Breast epithelium (tissue), 4 donors: ENCODE measurements at regions of chr3 and their contacts with region 1.

Region 1: DNA sequence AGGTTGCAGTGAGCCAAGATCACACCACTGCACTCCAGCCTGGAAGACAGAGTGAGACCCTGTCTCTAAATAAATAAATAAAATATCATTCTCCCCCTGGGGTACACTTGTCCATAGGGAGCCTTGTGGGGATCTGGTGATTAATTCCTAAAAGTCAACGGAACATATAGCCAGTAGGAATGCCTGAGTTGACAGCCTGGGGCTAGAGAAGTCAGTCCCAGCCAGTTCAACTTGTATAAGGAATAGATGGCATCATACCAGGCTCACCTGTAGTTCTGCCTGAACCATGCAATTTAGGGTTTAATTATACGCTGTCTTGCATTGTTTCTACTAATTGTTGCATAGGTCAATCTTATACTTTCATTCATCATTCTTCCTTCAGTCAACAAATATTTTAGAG is 5.9 kb upstream of the BOC start:
- DNase-seq: no peak
- H3K4me3 ChIP-seq: no peak overlapping the region
- H3K27ac ChIP-seq: no peak overlapping the region
- H3K4me1 ChIP-seq: peaks cover 0 to 3% of the 10 kb centered on the region in 2 donors
- H3K27me3 ChIP-seq: no peaks in the 10 kb centered on the region
- CTCF ChIP-seq: no peak
- POLR2A ChIP-seq: no peak

Region 2: DNA sequence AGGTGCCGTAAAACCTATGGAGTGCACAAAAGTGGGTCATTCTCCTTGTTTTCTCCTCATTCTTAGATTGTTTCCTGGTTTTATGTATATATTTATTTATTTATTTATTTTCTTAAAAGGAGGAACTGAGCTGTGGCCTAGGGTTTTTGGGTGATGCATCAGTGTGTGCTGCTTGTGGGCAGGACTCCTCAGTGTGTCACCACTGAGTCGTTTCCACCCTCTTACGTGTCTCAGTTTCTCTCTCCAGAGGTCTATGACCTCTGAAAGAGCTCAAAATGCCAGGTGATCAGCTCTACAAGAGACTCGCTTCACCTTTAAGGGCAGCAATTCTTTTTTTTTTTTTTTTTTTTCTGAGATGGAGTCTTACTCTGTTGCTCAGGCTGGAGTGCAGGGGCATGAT is 799.6 kb before region 1 on chr3:
- intact Hi-C with region 1: loop called (anchors 10 kb)
- DNase-seq: no peak
- H3K4me3 ChIP-seq: no peak overlapping the region
- H3K27ac ChIP-seq: no peak overlapping the region
- H3K4me1 ChIP-seq: no peaks in the 10 kb centered on the region
- H3K27me3 ChIP-seq: no peaks in the 10 kb centered on the region
- CTCF ChIP-seq: no peak
- POLR2A ChIP-seq: no peak